ENCODE measurements at regions of chr12 and their contacts with region 1.

Region 1: DNA sequence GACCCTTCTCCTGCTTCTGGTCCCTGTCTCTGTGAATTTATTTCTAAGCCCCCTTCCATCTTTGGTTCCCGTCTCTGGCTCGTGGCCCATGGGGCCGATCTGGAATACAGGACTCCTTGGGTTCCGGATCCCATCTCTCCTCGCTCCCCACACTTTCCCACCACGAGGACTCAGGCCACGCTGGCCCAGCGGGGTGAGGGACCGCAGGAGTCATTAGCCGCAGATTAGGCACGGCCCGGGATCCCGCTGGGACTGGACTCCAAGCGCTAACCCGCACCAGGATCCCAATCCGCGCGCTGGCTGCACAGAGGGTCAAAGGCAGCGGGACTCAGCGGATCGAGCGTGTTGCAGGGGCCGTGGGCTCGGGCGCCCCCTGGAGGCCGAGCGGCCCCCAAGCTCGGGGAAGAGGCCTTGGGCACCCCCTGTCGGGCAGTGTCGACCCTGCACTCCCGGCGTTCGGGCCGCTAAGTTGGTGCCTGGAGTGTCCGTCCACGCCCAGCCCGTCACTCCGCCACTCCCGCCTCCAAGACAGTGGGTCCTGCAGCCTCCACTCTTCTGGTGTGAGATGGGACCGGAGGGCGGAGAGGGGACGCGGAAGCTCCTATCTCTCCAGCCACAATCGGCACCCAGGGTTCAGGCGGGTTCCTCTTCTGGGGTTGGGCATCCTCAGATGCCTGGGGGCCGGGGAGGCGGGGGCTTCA is 9.5 kb downstream of the SHMT2 start:
- DNase-seq: peak; percentile 90
- H3K4me3 ChIP-seq: peak overlapping the region; percentile 74
- H3K27ac ChIP-seq: peak overlapping the region; percentile 92
- H3K4me1 ChIP-seq: peaks cover 53% of the 10 kb centered on the region
- CTCF ChIP-seq: peak; percentile 100

Region 2: GRCh38 chr12:56957229-56957939 is 281.6 kb before region 1 on chr12 and contains the start of gene RDH16:
- CTCF ChIA-PET with region 1: no interaction called
- POLR2A ChIA-PET with region 1: no interaction called
- intact Hi-C with region 1: no loop called
- DNase-seq: no peak
- H3K4me3 ChIP-seq: no peak within 1 kb of the TSS
- H3K27ac ChIP-seq: no peak within 1 kb of the TSS
- H3K4me1 ChIP-seq: no peaks in the 10 kb centered on the region
- CTCF ChIP-seq: no peak
- total RNA-seq, gene RDH16: 0.06 and 0.15 TPM in 2 replicates

Region 3: DNA sequence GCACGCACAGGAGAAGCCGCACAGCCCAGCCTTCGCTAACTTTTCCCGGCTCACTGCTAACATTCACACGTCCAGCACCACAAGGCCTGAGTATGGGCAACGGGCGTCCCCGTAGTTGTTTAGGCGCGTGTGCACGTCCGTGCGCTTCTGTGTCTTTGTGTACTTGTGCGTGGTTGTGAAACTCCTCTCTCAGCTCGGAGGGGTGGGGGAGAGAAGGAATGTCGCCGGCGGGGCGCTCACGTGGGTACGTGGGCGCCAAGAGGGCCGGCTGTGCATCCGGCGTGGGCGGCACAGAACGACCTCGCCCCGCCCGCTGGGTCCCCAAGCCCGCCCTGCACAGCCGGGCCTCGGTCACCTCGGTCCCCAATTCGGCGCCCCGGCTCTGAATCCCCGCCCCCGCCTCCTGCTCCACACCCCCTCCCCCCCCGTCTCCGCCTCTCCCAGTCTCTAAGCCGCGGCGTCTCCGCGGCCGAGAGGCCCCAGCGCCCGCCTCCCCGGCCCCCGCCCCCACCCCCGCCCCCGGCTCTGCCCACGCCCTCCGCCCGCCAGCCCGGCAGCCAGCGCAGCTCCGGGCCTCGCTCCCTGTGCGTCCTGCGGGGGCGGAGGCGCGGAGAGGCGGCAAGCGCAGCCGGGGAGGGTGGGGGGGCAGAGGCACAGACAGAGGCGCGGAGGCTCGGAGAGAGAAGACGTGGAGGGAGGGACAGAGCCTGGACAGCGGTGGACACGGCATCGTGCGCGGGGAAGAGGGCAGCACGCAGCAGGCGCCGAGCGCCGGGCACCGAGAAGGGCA is 150.3 kb before region 1 on chr12 and contains the start of gene NAB2:
- CTCF ChIA-PET with region 1: no interaction called
- POLR2A ChIA-PET with region 1: no interaction called
- intact Hi-C with region 1: loop called (anchors 2 kb)
- DNase-seq: peak; percentile 96
- H3K4me3 ChIP-seq: peak within 1 kb of the TSS; percentile 80
- H3K27ac ChIP-seq: peak within 1 kb of the TSS; percentile 88
- H3K4me1 ChIP-seq: peaks cover 42% of the 10 kb centered on the region
- CTCF ChIP-seq: no peak
- total RNA-seq, gene NAB2: 8.5 and 9.6 TPM in 2 replicates

Region 4: DNA sequence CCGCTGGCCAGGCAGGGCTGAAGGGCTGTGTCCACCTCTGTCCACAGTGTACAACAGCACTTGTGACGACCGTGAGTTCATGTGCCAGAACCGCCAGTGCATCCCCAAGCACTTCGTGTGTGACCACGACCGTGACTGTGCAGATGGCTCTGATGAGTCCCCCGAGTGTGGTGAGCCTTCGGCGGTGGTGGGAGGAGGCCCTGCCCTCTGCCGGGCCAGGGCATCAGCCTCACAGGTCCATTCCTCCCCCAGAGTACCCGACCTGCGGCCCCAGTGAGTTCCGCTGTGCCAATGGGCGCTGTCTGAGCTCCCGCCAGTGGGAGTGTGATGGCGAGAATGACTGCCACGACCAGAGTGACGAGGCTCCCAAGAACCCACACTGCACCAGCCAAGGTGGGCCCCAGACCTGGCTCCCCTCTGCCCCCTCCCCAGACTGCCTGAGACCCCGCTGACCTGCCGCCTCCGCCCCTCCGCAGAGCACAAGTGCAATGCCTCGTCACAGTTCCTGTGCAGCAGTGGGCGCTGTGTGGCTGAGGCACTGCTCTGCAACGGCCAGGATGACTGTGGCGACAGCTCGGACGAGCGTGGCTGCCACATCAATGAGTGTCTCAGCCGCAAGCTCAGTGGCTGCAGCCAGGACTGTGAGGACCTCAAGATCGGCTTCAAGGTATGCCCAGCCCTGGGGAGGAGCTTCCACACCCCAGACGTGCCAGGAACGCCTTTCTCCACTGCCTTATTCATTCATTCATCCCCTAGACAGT is 43.2 kb before region 1 on chr12:
- CTCF ChIA-PET with region 1: no interaction called
- POLR2A ChIA-PET with region 1: no interaction called
- intact Hi-C with region 1: no loop called
- DNase-seq: no peak
- H3K4me3 ChIP-seq: no peak overlapping the region
- H3K27ac ChIP-seq: no peak overlapping the region
- H3K4me1 ChIP-seq: no peaks in the 10 kb centered on the region
- CTCF ChIP-seq: no peak

Region 5: DNA sequence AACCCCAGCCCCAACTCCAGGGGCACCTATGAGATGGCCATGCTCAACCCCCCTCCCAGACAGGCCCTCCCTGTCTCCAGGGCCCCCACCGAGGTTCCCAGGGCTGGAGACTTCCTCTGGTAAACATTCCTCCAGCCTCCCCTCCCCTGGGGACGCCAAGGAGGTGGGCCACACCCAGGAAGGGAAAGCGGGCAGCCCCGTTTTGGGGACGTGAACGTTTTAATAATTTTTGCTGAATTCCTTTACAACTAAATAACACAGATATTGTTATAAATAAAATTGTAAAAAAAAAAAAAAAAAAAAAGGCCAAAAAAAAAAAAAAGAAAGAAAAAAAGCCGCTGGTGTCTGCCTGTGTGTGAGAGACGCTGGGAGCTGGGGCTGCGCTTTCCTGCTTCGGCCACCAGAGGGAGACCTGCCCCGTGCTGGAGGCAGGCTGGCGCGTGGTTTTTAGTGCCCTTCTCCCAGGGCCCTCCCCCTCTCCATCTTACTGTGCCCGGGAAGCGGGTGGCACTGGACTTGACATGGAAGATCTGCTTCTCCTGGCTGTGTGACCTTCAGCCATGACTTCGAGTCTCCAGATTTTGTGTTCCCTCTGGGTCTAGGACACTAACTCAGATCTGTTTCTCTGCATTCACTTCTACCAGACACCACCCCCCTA is 25.8 kb before region 1 on chr12:
- CTCF ChIA-PET with region 1: interaction called, 32 read pairs
- POLR2A ChIA-PET with region 1: interaction called, 26 read pairs
- intact Hi-C with region 1: loop called (anchors 1 kb)
- DNase-seq: peak; percentile 85
- H3K4me3 ChIP-seq: no peak overlapping the region
- H3K27ac ChIP-seq: no peak overlapping the region
- H3K4me1 ChIP-seq: peaks cover 68% of the 10 kb centered on the region
- CTCF ChIP-seq: peak; percentile 91

Region 6: GRCh38 chr12:57462251-57462911 is 223.4 kb after region 1 on chr12:
- CTCF ChIA-PET with region 1: interaction called, 3 read pairs
- POLR2A ChIA-PET with region 1: interaction called, 3 read pairs
- intact Hi-C with region 1: loop called (anchors 5 kb)
- DNase-seq: peak; percentile 94
- H3K4me3 ChIP-seq: peak overlapping the region; percentile 77
- H3K27ac ChIP-seq: peak overlapping the region; percentile 67
- H3K4me1 ChIP-seq: peaks cover 26% of the 10 kb centered on the region
- CTCF ChIP-seq: peak; percentile 98

Region 7: DNA sequence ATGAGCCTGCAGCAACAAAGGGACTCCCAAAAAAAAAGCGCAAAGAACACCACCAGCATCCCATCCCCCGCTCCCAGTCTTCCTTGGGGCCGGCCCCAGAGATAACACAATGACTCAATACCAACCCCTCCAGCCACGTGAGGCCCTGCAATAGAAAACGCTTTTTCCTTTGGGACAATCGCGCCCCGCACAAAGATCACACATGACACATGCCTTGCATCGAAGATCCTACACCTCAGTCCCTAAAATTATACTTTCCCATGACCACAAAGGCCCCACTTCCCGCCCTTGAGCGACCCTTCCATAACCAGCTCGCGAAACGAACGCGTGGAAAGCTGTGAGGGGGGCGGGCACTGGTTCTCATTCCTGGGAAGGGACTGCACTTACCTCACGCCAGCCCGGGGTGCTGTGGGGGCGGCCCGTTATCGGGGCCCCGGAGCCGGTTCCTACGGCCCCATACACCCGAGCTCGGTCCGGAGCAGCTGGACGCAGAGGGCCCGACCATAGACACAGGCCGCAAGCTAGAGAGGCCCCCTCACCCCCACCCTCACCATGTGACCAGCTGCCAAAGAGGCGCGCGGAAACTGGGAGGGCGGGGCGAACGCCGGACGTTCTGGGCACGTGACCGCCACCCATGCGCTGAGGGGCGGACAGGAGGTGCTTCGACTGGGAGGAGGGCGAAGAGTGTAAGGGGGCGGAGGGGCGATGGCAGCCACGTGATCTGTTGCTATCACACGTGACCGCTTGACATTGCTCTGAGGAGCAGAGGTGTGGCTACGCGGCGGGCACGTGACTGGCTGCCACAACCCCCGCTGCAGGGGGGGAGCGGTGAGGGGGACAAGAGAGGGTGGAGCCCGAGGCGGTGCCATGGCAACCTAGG is 513.0 kb after region 1 on chr12 and contains the start of gene CDK4:
- CTCF ChIA-PET with region 1: no interaction called
- POLR2A ChIA-PET with region 1: no interaction called
- intact Hi-C with region 1: loop called (anchors 5 kb)
- DNase-seq: peak; percentile 100
- H3K4me3 ChIP-seq: peak within 1 kb of the TSS; percentile 92
- H3K27ac ChIP-seq: peak within 1 kb of the TSS; percentile 42
- H3K4me1 ChIP-seq: peaks cover 39% of the 10 kb centered on the region
- CTCF ChIP-seq: no peak
- total RNA-seq, gene CDK4: 272 and 280 TPM in 2 replicates